Activated CD8-positive, alpha-beta memory T cell treated with anti-CD3 and anti-CD28 coated beads, Interleukin-2, amount 10 ng/mL, durations not matched to agents 7 days and 5 days (primary cell): ENCODE measurements at regions of chr9 and their contacts with region 1.

Region 1: DNA sequence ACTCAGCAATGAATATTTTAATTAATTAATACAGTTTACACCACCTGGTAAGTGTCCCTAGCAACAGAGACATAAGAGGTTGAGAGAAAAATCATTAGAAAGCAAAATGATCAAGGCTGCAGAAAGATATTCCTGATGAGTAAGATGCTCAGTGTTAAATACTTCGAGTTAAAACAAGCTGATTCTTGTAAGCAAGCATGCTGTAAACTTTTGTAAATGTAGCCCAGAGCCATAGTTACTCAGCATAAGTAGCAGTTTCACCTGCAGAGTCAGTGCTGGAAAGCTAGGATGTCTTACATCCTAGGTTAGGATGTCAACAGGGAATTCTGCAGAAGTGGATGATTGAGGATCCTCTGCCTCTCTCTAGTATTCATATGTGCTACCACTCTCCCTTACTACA is 4.2 kb downstream of the PRKACG start:
- DNase-seq: no peak
- ATAC-seq: no peak
- H3K4me3 Mint-ChIP-seq: no peak overlapping the region
- H3K27ac Mint-ChIP-seq: no peak overlapping the region
- H3K4me1 Mint-ChIP-seq: peaks cover 14% of the 10 kb centered on the region
- H3K27me3 Mint-ChIP-seq: peaks cover 44% of the 10 kb centered on the region

Region 2: DNA sequence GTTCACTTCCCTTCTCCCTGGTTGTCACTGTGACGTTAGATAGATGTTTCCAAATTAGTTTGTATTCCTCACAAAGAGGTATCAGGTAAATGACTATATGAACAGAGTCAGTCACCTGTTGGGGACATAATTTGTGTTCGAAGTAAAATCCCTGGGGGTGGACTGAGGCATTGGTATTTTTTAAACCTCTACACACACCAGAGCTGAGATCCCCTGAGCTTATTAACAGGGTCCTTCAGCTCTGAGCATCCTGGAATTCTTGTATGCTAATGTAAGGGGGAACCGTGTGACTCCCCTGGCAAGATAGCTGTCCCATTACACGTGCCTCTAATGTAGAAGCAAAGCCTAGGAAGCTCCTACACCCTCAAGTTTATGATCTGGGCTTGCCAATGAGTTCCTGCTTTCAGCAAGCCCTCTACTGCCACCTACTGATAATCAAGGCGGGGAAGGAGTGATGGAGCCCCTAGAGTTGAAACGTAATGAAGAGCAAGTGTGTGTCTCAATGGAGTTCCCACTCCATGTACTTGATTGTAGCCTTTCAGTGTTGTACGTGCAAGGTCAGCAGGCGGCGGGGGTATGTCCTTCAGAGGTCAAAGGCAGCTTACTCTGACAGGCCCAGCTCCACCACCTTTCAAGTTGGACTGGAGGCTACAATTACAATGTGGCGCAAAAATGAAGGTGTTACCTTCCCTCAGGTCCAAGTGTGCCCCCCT is 10.2 kb before region 1 on chr9:
- CTCF ChIA-PET with region 1: interaction called, 12 read pairs
- DNase-seq: peak; percentile 80
- ATAC-seq: peak; percentile 96
- H3K4me3 Mint-ChIP-seq: no peak overlapping the region
- H3K27ac Mint-ChIP-seq: no peak overlapping the region
- H3K4me1 Mint-ChIP-seq: peaks cover 24% of the 10 kb centered on the region
- H3K27me3 Mint-ChIP-seq: peaks cover 23% of the 10 kb centered on the region

Region 3: DNA sequence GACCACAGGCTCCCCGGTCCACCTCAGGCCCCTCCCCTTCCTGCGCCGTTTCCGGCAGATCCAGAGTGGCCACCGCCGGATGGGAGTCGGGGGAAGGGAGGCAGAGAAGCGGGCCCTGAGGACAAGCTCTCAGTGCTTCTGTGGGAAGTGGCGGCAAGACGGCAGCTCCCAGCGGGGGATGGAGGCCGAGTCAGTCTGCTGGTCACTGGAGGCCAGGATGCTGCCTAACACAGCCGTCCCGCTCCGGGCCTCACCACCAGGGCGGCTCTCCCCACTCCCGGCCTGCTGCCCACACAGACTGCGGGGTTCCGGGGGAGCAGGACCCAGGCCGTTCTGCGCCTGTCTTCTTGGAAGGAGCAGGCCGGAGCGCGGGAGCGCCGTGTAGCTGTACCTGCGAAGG is 57.2 kb after region 1 on chr9:
- CTCF ChIA-PET with region 1: no interaction called
- DNase-seq: no peak
- ATAC-seq: no peak
- H3K4me3 Mint-ChIP-seq: no peak overlapping the region
- H3K27ac Mint-ChIP-seq: no peak overlapping the region
- H3K4me1 Mint-ChIP-seq: no peaks in the 10 kb centered on the region
- H3K27me3 Mint-ChIP-seq: no peaks in the 10 kb centered on the region